ENCODE measurements at regions of chr2 and their contacts with region 1.

Region 1: DNA sequence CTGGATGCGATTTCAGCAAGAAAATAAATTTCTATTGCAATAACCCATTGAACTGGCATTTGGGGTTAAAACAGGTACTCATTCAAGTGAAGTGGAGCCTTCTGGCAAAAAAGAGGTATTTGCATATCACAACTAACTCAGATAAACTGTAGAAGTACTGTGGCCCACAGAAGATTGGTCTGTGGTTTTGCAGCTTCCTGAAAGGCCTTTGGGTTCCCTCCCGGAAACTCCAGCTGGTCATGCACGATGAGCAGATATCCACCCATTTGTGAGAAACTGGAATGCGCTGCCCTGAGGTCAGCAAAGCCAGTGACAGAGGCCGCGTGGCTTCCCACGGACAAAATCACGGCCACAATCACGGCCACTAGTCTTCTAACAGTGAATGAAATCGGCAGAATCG is 106.3 kb downstream of the EPHA4 start:
- DNase-seq: no peak
- H3K4me3 ChIP-seq: no peak overlapping the region
- H3K27ac ChIP-seq: no peak overlapping the region
- H3K4me1 ChIP-seq: peaks cover 14% of the 10 kb centered on the region
- H3K27me3 ChIP-seq: no peaks in the 10 kb centered on the region
- CTCF ChIP-seq: no peak

Region 2: GRCh38 chr2:221444106-221444505 is 21.7 kb before region 1 on chr2:
- CTCF ChIA-PET with region 1: no interaction called
- POLR2A ChIA-PET with region 1: no interaction called
- intact Hi-C with region 1: loop called (anchors 1 kb)
- DNase-seq: peak; percentile 65 to 97
- H3K4me3 ChIP-seq: peak overlapping the region; percentile 8; the same call in 1 of the 2 replicates
- H3K27ac ChIP-seq: peak overlapping the region; percentile 58
- H3K4me1 ChIP-seq: peaks cover 58% of the 10 kb centered on the region
- H3K27me3 ChIP-seq: no peaks in the 10 kb centered on the region
- CTCF ChIP-seq: no peak

Region 3: GRCh38 chr2:221810245-221810644 is 344.5 kb after region 1 on chr2:
- CTCF ChIA-PET with region 1: interaction called, 14 read pairs
- POLR2A ChIA-PET with region 1: no interaction called
- intact Hi-C with region 1: no loop called
- DNase-seq: no peak
- H3K4me3 ChIP-seq: no peak overlapping the region
- H3K27ac ChIP-seq: no peak overlapping the region
- H3K4me1 ChIP-seq: peaks cover 30% of the 10 kb centered on the region
- H3K27me3 ChIP-seq: no peaks in the 10 kb centered on the region
- CTCF ChIP-seq: no peak